Activated CD4-positive, alpha-beta memory T cell treated with anti-CD3 and anti-CD28 coated beads for 36 hours (primary cell): ENCODE measurements at regions of chr7 and their contacts with region 1.

Region 1: DNA sequence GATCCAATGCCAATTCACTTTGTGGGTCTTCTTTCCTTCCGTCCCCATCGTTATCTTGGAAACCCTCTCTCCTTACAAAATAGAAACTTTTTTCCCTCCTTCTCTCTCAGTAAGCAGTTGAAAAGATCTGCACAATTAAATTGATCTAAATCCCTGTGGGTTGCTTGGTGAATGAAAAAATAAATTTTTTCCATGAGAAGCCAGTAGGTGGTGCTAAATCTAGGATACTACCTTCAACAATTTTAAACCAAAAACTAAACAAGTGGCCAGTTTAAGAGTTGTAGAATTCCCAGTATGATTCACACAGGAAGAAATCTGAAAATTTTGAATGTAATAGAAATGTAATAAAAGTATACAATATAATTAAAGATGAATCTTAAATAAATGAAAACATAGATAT is 990.3 kb upstream of the ZNF722 start:
- DNase-seq: no peak
- H3K4me3 Mint-ChIP-seq: no peak overlapping the region
- H3K27ac Mint-ChIP-seq: no peak overlapping the region
- H3K4me1 Mint-ChIP-seq: no peaks in the 10 kb centered on the region
- H3K27me3 Mint-ChIP-seq: no peaks in the 10 kb centered on the region

Region 2: DNA sequence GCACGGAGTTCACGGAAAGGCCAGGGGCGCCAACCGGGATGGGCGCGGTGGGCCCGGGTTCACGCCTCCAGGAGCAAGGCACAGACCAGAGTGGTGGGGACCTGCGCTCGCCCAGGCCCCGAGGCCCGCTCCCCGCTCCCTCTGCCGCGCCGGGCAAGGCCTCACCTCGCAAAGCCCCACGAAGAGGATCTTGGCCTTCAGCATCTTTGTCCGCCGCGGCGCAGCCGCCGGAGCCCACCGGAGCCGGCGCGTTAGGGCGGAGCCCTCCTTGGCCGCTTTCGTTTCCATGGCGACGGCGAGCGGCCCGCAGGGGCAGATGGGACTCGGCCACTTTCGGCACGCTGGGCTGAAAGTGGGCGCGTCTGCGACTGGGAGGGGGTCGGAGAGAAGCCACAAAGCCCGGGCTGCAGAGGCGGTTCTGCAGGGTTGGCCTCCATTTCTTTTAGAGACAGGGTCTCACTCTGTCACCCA is 45.9 kb after region 1 on chr7:
- CTCF ChIA-PET with region 1: no interaction called
- POLR2A ChIA-PET with region 1: no interaction called
- intact Hi-C with region 1: no loop called
- DNase-seq: no peak
- H3K4me3 Mint-ChIP-seq: no peak overlapping the region
- H3K27ac Mint-ChIP-seq: no peak overlapping the region
- H3K4me1 Mint-ChIP-seq: no peaks in the 10 kb centered on the region
- H3K27me3 Mint-ChIP-seq: no peaks in the 10 kb centered on the region

Region 3: GRCh38 chr7:63106506-63107388 is 98.4 kb after region 1 on chr7:
- CTCF ChIA-PET with region 1: no interaction called
- POLR2A ChIA-PET with region 1: no interaction called
- intact Hi-C with region 1: no loop called
- DNase-seq: no peak
- H3K4me3 Mint-ChIP-seq: no peak overlapping the region
- H3K27ac Mint-ChIP-seq: no peak overlapping the region
- H3K4me1 Mint-ChIP-seq: no peaks in the 10 kb centered on the region
- H3K27me3 Mint-ChIP-seq: no peaks in the 10 kb centered on the region

Region 4: DNA sequence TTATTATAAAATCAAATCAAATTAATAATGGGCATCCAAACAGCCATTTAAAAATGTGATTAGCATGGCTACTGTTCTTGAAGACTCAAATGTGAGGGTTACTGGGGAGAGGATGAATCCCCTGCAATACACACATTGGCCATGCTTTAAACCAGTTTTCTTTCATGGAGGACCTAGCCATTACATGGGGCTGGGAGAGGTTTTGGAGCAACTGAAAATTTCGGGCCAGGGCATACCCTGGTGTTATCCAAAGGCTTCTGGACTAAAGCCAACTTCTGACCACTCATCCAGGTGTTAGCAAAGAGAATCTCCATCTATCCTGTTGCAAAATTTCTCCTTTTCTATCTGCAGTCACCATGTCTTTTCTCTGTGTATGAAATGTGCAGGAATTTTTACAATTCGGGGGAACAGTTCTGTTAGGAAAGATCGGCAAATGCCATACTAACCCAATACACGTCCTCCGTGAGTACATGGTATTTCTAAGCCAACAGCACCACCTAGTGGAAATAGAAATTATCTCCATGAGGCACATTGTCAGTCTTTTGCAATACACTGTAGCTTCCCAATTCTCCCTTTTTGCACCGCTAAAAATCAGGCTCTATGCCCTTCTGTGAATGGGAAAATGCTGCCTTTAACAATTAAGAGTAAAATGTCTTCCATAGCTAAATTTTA is 1610.6 kb after region 1 on chr7:
- CTCF ChIA-PET with region 1: no interaction called
- POLR2A ChIA-PET with region 1: no interaction called
- intact Hi-C with region 1: loop called (anchors 5 kb)
- DNase-seq: no peak
- H3K4me3 Mint-ChIP-seq: no peak overlapping the region
- H3K27ac Mint-ChIP-seq: no peak overlapping the region
- H3K4me1 Mint-ChIP-seq: no peaks in the 10 kb centered on the region
- H3K27me3 Mint-ChIP-seq: no peaks in the 10 kb centered on the region